ENCODE measurements at regions of chr4 and their contacts with region 1.

Region 1: GRCh38 chr4:127174616-127175015 is 458.1 kb upstream of the INTU start:
- DNase-seq: no peak
- ATAC-seq: no peak
- H3K4me3 ChIP-seq: no peak overlapping the region
- H3K27ac ChIP-seq: no peak overlapping the region
- H3K4me1 ChIP-seq: no peaks in the 10 kb centered on the region
- H3K27me3 ChIP-seq: no peaks in the 10 kb centered on the region
- CTCF ChIP-seq: no peak

Region 2: DNA sequence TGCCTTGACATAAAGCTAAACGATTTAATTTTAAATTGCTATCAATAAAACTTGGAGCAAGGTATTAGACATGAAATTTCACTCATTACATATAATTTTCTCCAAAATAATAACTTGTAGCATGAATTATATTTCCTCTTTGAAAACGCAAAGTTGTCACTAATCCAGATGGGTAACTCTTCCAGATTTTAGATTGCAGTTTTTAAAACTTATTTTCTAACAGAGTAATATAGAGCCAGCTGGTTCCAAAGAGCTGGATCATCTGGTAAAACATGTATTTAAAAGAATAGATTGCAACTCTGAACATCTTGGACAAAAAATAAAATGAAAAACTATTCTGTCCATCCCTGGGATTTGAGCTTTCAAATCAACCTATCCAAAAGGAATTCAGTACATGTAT is 219.9 kb after region 1 on chr4:
- CTCF ChIA-PET with region 1: no interaction called
- POLR2A ChIA-PET with region 1: no interaction called
- intact Hi-C with region 1: loop called (anchors 10 kb)
- DNase-seq: no peak
- ATAC-seq: no peak
- H3K4me3 ChIP-seq: no peak overlapping the region
- H3K27ac ChIP-seq: no peak overlapping the region
- H3K4me1 ChIP-seq: no peaks in the 10 kb centered on the region
- H3K27me3 ChIP-seq: no peaks in the 10 kb centered on the region
- CTCF ChIP-seq: no peak